ENCODE measurements at regions of chr7 and their contacts with region 1.

Region 1: GRCh38 chr7:149662591-149663095 is 110.7 kb downstream of the ZNF467 start:
- DNase-seq: peak; percentile 84
- H3K4me3 Mint-ChIP-seq: no peak overlapping the region
- H3K27ac Mint-ChIP-seq: no peak overlapping the region
- H3K4me1 Mint-ChIP-seq: no peaks in the 10 kb centered on the region
- H3K27me3 Mint-ChIP-seq: peaks cover 51% of the 10 kb centered on the region

Region 2: DNA sequence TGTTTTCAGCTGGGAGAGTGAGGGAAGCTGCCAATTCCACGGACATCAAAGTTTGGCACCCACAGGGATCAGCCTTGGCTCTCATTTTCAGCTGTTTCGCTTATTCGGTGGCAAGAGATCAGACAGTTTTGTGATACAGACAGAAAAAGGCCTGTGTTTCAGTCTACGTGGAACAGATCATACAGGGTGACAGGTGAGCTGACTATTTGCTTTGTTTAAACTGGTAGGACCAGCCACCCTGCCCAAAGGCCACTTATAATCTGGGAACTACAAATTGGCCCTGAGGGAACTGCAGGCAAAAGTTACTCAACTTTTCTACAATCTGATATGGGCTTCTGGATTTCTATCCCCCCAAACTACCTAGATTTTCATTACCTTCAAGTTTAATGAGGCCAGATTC is 17.9 kb before region 1 on chr7:
- CTCF ChIA-PET with region 1: interaction called, 10 read pairs
- DNase-seq: no peak
- H3K4me3 Mint-ChIP-seq: no peak overlapping the region
- H3K27ac Mint-ChIP-seq: no peak overlapping the region
- H3K4me1 Mint-ChIP-seq: no peaks in the 10 kb centered on the region
- H3K27me3 Mint-ChIP-seq: peaks cover 12% of the 10 kb centered on the region

Region 3: GRCh38 chr7:149742075-149742701 is 79.5 kb after region 1 on chr7:
- CTCF ChIA-PET with region 1: interaction called, 111 read pairs
- DNase-seq: peak; percentile 69
- H3K4me3 Mint-ChIP-seq: peak overlapping the region; percentile 30
- H3K27ac Mint-ChIP-seq: no peak overlapping the region
- H3K4me1 Mint-ChIP-seq: peaks cover 10% of the 10 kb centered on the region
- H3K27me3 Mint-ChIP-seq: peaks cover 82% of the 10 kb centered on the region

Region 4: DNA sequence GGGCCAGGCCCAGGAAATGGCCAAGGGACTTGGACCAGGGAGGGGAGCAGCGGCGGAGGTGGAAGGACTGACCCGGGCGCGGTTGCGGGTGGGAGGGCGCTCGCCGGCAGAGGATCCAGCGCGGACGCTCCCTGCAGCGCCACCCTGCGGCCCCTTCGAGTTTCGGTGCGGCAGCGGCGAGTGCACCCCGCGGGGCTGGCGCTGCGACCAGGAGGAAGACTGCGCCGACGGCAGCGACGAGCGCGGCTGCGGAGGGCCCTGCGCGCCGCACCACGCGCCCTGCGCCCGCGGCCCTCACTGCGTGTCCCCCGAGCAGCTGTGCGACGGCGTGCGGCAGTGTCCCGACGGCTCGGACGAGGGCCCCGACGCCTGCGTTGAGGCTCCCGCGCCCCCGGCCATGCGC is 127.5 kb after region 1 on chr7:
- CTCF ChIA-PET with region 1: interaction called, 36 read pairs
- DNase-seq: peak; percentile 63
- H3K4me3 Mint-ChIP-seq: no peak overlapping the region
- H3K27ac Mint-ChIP-seq: no peak overlapping the region
- H3K4me1 Mint-ChIP-seq: peaks cover 2% of the 10 kb centered on the region
- H3K27me3 Mint-ChIP-seq: peaks cover 68% of the 10 kb centered on the region

Region 5: GRCh38 chr7:149799397-149800171 is 136.9 kb after region 1 on chr7:
- CTCF ChIA-PET with region 1: interaction called, 22 read pairs
- DNase-seq: peak; percentile 74
- H3K4me3 Mint-ChIP-seq: no peak overlapping the region
- H3K27ac Mint-ChIP-seq: no peak overlapping the region
- H3K4me1 Mint-ChIP-seq: no peaks in the 10 kb centered on the region
- H3K27me3 Mint-ChIP-seq: peaks cover 4% of the 10 kb centered on the region

Measured in activated naive CD4-positive, alpha-beta T cell treated with anti-CD3 and anti-CD28 coated beads, Interleukin-2, amount 10 ng/mL, durations not matched to agents 7 days and 5 days (primary cell).